Activated T-helper 2 cell treated with anti-CD3 and anti-CD28 coated beads, Interferon-gamma antibody, Interleukin-2, Interleukin-4, amounts not matched to agents 10 μg/mL and 5 μg/mL and 100 μg/mL, durations not matched to agents 14 hours and 24 hours and 36 hours (primary cell): ENCODE measurements at regions of chr10 and their contacts with region 1.

Region 1: GRCh38 chr10:14959276-14960057 is at the start of gene MEIG1:
- DNase-seq: peak; percentile 88
- H3K4me3 Mint-ChIP-seq: peak within 1 kb of the TSS; percentile 94
- H3K27ac Mint-ChIP-seq: peak within 1 kb of the TSS; percentile 99
- H3K4me1 Mint-ChIP-seq: peaks cover 29% of the 10 kb centered on the region
- H3K27me3 Mint-ChIP-seq: no peaks in the 10 kb centered on the region
- total RNA-seq, gene MEIG1: 0.62 TPM in 1 of 2 replicates, not detected in the other

Region 2: GRCh38 chr10:14536241-14537213 is 422.9 kb before region 1 on chr10:
- intact Hi-C with region 1: loop called (anchors 10 kb)
- DNase-seq: no peak
- H3K4me3 Mint-ChIP-seq: no peak overlapping the region
- H3K27ac Mint-ChIP-seq: no peak overlapping the region
- H3K4me1 Mint-ChIP-seq: peaks cover 54% of the 10 kb centered on the region
- H3K27me3 Mint-ChIP-seq: no peaks in the 10 kb centered on the region

Region 3: DNA sequence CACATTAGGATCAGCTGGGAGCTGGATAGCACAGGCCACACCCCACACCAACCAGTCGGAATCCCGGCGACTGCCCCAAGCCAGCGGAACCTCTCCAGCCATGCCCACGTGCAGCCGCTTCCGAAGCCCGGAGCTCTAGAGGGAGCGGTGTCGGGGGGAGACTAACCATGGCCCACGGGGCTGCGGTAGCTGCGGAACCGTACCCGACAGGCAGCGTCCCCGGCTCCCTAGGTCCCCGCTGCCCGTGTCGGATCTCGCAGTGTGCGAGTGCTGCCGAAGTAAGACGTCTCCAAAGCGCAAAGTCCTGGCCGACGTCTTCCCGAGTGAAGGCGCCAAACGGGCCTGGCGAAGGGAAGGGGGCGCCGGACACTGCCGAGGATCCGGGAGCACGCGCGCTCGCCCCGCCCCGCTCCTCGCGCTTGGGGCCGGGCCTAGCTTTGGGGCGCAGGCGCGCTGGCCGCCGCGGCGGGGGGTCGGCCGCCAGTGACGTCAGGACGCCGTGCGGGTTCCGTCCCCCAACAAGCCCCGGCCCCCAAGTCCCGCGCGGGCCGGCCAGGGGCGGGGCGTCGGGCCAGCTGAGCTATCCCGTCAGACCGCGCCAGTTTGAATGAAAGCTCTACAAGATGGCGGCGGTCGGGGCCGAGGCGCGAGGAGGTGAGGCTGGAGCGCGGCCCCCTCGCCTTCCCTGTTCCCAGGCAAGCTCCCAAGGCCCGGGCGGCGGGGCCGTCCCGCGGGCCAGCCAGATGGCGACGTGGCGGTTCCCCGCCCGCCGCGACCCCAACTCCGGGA is 81.0 kb before region 1 on chr10 and contains the start of gene SUV39H2:
- intact Hi-C with region 1: loop called (anchors 1 kb)
- DNase-seq: peak; percentile 93
- H3K4me3 Mint-ChIP-seq: peak within 1 kb of the TSS; percentile 94
- H3K27ac Mint-ChIP-seq: peak within 1 kb of the TSS; percentile 88
- H3K4me1 Mint-ChIP-seq: peaks cover 34% of the 10 kb centered on the region
- H3K27me3 Mint-ChIP-seq: no peaks in the 10 kb centered on the region
- total RNA-seq, gene SUV39H2: 44.0 and 45.0 TPM in 2 replicates

Region 4: DNA sequence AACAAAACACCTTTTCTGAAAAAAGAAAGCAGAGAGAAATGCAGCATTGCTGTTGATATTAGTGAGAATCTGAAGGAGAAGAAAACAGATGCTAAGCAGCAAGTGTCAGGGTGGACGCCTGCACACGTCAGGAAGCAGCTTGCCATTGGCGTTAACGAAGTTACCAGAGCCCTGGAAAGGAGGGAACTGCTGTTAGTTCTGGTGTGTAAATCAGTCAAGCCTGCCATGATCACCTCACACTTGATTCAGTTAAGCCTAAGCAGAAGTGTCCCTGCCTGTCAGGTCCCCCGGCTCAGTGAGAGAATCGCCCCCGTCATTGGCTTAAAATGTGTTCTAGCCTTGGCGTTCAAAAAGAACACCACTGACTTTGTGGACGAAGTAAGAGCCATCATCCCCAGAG is 144.0 kb after region 1 on chr10:
- intact Hi-C with region 1: no loop called
- DNase-seq: no peak
- H3K4me3 Mint-ChIP-seq: no peak overlapping the region
- H3K27ac Mint-ChIP-seq: peak overlapping the region; percentile 7
- H3K4me1 Mint-ChIP-seq: peaks cover 22% of the 10 kb centered on the region
- H3K27me3 Mint-ChIP-seq: no peaks in the 10 kb centered on the region